ENCODE measurements at regions of chr6 and their contacts with region 1.

Region 1: GRCh38 chr6:129251669-129252376 is 368.9 kb downstream of the LAMA2 start:
- DNase-seq: peak; percentile 50 to 74
- H3K4me3 ChIP-seq: no peak overlapping the region
- H3K4me3 Mint-ChIP-seq: no peak overlapping the region
- H3K27ac Mint-ChIP-seq: no peak overlapping the region
- H3K4me1 ChIP-seq: no peaks in the 10 kb centered on the region
- H3K4me1 Mint-ChIP-seq: no peaks in the 10 kb centered on the region
- H3K27me3 ChIP-seq: no peaks in the 10 kb centered on the region
- H3K27me3 Mint-ChIP-seq: peaks cover 14% of the 10 kb centered on the region
- CTCF ChIP-seq: peak; percentile 77 to 82

Region 2: DNA sequence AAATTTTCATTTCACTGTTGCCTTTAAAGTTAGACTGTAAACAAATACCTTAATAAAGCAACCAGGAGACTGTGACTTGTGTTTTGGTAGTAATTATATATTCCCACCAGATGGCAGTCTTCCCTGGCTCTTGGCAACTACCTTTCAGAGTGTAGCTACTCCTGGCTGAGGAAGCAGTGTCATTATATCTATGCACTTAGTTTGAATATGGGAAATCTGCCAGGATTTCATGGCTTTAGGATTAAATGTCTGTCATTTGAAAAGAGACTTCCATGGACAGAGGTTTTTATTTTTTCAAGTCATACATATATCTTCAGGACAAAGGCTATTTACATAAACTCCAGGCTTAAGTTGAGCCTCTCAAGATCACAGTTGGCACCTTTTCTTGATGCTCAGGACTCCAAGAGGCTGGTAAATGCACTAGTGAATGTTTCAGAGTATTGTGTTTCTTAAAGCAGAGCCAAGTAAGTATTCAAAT is 1514.8 kb before region 1 on chr6:
- CTCF ChIA-PET with region 1: no interaction called
- POLR2A ChIA-PET with region 1: no interaction called
- intact Hi-C with region 1: loop called (anchors 10 kb)
- DNase-seq: peak in 1 of 2 experiments; percentile 56
- H3K4me3 ChIP-seq: no peak overlapping the region
- H3K4me3 Mint-ChIP-seq: no peak overlapping the region
- H3K27ac Mint-ChIP-seq: no peak overlapping the region
- H3K4me1 ChIP-seq: no peaks in the 10 kb centered on the region
- H3K4me1 Mint-ChIP-seq: no peaks in the 10 kb centered on the region
- H3K27me3 ChIP-seq: no peaks in the 10 kb centered on the region
- H3K27me3 Mint-ChIP-seq: peaks cover 3% of the 10 kb centered on the region
- CTCF ChIP-seq: peak; percentile 56 to 57

Region 3: GRCh38 chr6:128725271-128726233 is 526.3 kb before region 1 on chr6:
- CTCF ChIA-PET with region 1: no interaction called
- POLR2A ChIA-PET with region 1: no interaction called
- intact Hi-C with region 1: loop called (anchors 1 kb)
- DNase-seq: peak in 1 of 2 experiments; percentile 45
- H3K4me3 ChIP-seq: no peak overlapping the region
- H3K4me3 Mint-ChIP-seq: no peak overlapping the region
- H3K27ac Mint-ChIP-seq: no peak overlapping the region
- H3K4me1 ChIP-seq: no peaks in the 10 kb centered on the region
- H3K4me1 Mint-ChIP-seq: no peaks in the 10 kb centered on the region
- H3K27me3 ChIP-seq: no peaks in the 10 kb centered on the region
- H3K27me3 Mint-ChIP-seq: peaks cover 16% of the 10 kb centered on the region
- CTCF ChIP-seq: peak; percentile 55 to 80

Region 4: GRCh38 chr6:128807577-128807976 is 444.2 kb before region 1 on chr6:
- CTCF ChIA-PET with region 1: interaction called, 4 read pairs
- POLR2A ChIA-PET with region 1: no interaction called
- intact Hi-C with region 1: loop called (anchors 1 kb)
- DNase-seq: peak in 1 of 2 experiments; percentile 4
- H3K4me3 ChIP-seq: no peak overlapping the region
- H3K4me3 Mint-ChIP-seq: no peak overlapping the region
- H3K27ac Mint-ChIP-seq: no peak overlapping the region
- H3K4me1 ChIP-seq: no peaks in the 10 kb centered on the region
- H3K4me1 Mint-ChIP-seq: no peaks in the 10 kb centered on the region
- H3K27me3 ChIP-seq: no peaks in the 10 kb centered on the region
- H3K27me3 Mint-ChIP-seq: peaks cover 8% of the 10 kb centered on the region
- CTCF ChIP-seq: peak; percentile 29 to 51

Region 5: GRCh38 chr6:128981716-128982115 is 270.1 kb before region 1 on chr6:
- CTCF ChIA-PET with region 1: no interaction called
- POLR2A ChIA-PET with region 1: no interaction called
- intact Hi-C with region 1: loop called (anchors 1 kb)
- DNase-seq: no peak
- H3K4me3 ChIP-seq: no peak overlapping the region
- H3K4me3 Mint-ChIP-seq: no peak overlapping the region
- H3K27ac Mint-ChIP-seq: no peak overlapping the region
- H3K4me1 ChIP-seq: no peaks in the 10 kb centered on the region
- H3K4me1 Mint-ChIP-seq: no peaks in the 10 kb centered on the region
- H3K27me3 ChIP-seq: no peaks in the 10 kb centered on the region
- H3K27me3 Mint-ChIP-seq: peaks cover 13% of the 10 kb centered on the region
- CTCF ChIP-seq: no peak

Region 6: GRCh38 chr6:129133770-129134192 is 118.0 kb before region 1 on chr6:
- CTCF ChIA-PET with region 1: no interaction called
- POLR2A ChIA-PET with region 1: no interaction called
- intact Hi-C with region 1: loop called (anchors 1 kb)
- DNase-seq: no peak
- H3K4me3 ChIP-seq: no peak overlapping the region
- H3K4me3 Mint-ChIP-seq: no peak overlapping the region
- H3K27ac Mint-ChIP-seq: no peak overlapping the region
- H3K4me1 ChIP-seq: no peaks in the 10 kb centered on the region
- H3K4me1 Mint-ChIP-seq: no peaks in the 10 kb centered on the region
- H3K27me3 ChIP-seq: no peaks in the 10 kb centered on the region; the same call in 1 of the 2 replicates
- H3K27me3 Mint-ChIP-seq: peaks cover 3% of the 10 kb centered on the region
- CTCF ChIP-seq: no peak

Region 7: DNA sequence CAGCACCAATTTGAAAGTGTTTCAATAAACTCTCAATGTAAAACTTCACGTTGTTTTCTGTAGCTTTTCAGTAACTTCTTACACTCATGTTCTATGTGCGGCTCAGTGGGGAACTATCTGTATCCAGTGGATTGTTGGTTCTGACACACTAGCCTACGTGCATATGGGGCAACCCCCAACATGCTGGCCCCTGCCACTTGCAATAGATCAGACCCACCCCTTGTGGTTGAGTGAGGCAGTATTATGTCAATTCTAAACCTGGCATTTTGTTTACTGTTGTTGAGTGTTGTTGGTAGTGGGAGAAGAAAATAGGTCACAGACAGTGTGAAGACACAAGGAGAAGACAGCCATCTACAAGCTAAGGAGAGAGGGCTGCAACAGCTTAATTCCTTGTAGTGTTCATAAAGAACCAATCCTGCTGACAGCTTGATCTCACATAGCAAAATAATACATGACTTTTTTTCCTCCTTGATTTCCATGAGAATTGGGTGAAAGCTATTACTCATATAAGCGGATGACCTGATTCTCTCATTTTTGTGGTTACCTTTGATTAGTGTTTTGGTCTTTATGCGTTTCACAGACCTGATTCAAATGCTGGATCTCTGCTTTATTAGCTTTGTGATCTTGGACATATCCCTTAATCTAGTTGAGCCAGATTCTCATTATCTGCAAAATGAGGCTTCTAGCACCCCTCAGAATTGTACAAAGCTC is 48.5 kb before region 1 on chr6:
- CTCF ChIA-PET with region 1: no interaction called
- POLR2A ChIA-PET with region 1: no interaction called
- intact Hi-C with region 1: no loop called
- DNase-seq: no peak
- H3K4me3 ChIP-seq: no peak overlapping the region
- H3K4me3 Mint-ChIP-seq: no peak overlapping the region
- H3K27ac Mint-ChIP-seq: no peak overlapping the region
- H3K4me1 ChIP-seq: no peaks in the 10 kb centered on the region
- H3K4me1 Mint-ChIP-seq: no peaks in the 10 kb centered on the region
- H3K27me3 ChIP-seq: no peaks in the 10 kb centered on the region
- H3K27me3 Mint-ChIP-seq: no peaks in the 10 kb centered on the region
- CTCF ChIP-seq: no peak

Region 8: GRCh38 chr6:129215916-129216525 is 35.8 kb before region 1 on chr6:
- CTCF ChIA-PET with region 1: interaction called, 3 read pairs
- POLR2A ChIA-PET with region 1: no interaction called
- intact Hi-C with region 1: loop called (anchors 2 kb)
- DNase-seq: no peak
- H3K4me3 ChIP-seq: no peak overlapping the region
- H3K4me3 Mint-ChIP-seq: no peak overlapping the region
- H3K27ac Mint-ChIP-seq: no peak overlapping the region
- H3K4me1 ChIP-seq: no peaks in the 10 kb centered on the region
- H3K4me1 Mint-ChIP-seq: no peaks in the 10 kb centered on the region
- H3K27me3 ChIP-seq: no peaks in the 10 kb centered on the region
- H3K27me3 Mint-ChIP-seq: no peaks in the 10 kb centered on the region
- CTCF ChIP-seq: no peak